ENCODE measurements at regions of chr15 and their contacts with region 1.

Region 1: GRCh38 chr15:58269455-58270414 is 131.6 kb downstream of the AQP9 start:
- DNase-seq: peak; percentile 35
- H3K4me3 ChIP-seq: no peak overlapping the region
- CTCF ChIP-seq: peak; percentile 81

Region 2: GRCh38 chr15:58165661-58166060 is 104.1 kb before region 1 on chr15:
- in situ Hi-C with region 1: no loop called
- DNase-seq: no peak
- H3K4me3 ChIP-seq: no peak overlapping the region
- CTCF ChIP-seq: no peak

Region 3: GRCh38 chr15:58212909-58213526 is 56.7 kb before region 1 on chr15:
- in situ Hi-C with region 1: no loop called
- DNase-seq: no peak
- H3K4me3 ChIP-seq: no peak overlapping the region
- CTCF ChIP-seq: peak; percentile 75

Region 4: GRCh38 chr15:58227706-58228543 is 41.8 kb before region 1 on chr15:
- in situ Hi-C with region 1: no loop called
- DNase-seq: peak; percentile 73
- H3K4me3 ChIP-seq: no peak overlapping the region
- CTCF ChIP-seq: peak; percentile 84

Region 5: DNA sequence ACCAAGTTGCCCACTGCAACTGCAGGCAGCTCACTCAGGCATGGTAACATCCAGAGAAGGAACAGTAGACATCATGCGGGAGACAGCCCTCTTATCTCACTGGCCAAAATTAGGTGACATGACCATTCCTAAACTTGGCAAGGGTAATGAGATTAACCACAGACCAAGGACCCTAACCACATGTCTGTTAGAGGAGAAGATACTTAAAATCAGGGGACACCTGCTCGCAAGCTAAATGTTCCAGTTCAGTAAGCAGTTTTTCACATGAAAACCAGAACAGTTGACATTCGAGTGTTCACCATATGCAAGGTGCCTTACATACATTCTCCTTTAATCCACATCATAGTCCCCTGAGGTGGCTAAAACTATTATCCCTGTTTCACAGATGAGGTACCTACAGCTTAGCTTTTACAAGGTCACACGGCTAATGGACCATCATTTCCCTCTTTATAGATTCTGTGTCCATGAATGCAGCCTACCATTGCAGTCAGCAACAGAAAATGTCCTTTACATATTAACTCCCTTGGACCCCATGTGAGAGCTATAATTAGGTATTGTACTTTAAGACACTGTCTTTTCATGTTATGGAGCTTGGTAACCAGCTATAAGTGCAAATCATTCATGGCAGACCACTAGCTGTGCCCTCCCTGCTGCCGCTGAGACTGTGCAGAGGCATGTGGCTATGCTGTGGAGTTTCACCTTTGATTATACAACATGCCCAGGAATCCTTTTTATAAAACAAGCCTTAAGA is 316.1 kb after region 1 on chr15:
- in situ Hi-C with region 1: loop called (anchors 25 kb)
- DNase-seq: no peak
- H3K4me3 ChIP-seq: no peak overlapping the region
- CTCF ChIP-seq: no peak

Region 6: GRCh38 chr15:58880320-58880719 is 610.6 kb after region 1 on chr15:
- in situ Hi-C with region 1: loop called (anchors 25 kb)
- DNase-seq: no peak
- H3K4me3 ChIP-seq: no peak overlapping the region
- CTCF ChIP-seq: no peak